Activated CD4-positive, alpha-beta T cell treated with anti-CD3 and anti-CD28 coated beads, Interleukin-2, amount 10 ng/mL, durations not matched to agents 24 days and 14 days (primary cell): ENCODE measurements at regions of chr2 and their contacts with region 1.

Region 1: DNA sequence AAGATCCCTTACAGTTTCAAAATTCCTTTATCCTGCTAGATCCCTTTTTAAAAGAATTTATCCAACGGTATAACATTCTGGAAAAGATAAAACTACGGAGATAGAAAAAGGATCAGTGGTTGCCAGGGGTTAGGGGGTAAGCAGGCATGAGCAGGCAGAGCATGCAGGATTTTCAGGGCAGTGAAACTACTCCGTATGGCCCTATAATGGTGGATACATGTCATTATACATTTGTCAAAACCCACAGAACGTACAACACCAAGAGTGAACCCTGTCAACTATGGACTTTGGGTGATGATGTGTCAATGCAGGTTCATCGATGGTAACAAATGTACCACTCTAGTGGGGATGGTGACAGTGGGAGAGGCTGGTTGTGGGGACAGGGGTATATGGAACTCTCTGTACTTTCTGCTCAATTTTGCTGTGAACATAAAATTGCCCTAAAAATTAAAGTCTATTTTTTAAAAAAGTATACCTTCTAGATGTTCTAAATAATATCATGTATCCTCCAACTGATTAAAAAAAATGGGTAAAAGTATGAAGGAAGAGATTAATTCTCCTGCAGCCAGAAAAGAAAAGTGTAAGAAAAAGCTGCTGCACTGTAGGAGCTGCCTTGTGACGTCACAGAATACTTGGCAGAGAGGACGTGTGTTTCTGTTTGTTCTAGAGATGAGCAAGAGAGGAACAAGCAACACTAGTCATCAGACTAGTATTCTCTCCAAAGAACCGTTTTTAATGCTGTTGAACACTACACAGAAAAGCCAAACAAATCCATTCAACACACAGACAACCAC is 23.6 kb downstream of the ANKRD44 start:
- DNase-seq: peak; percentile 86
- H3K4me3 Mint-ChIP-seq: peak overlapping the region; percentile 73
- H3K27ac Mint-ChIP-seq: peak overlapping the region; percentile 97
- H3K4me1 Mint-ChIP-seq: peaks cover 60% of the 10 kb centered on the region
- H3K27me3 Mint-ChIP-seq: no peaks in the 10 kb centered on the region

Region 2: DNA sequence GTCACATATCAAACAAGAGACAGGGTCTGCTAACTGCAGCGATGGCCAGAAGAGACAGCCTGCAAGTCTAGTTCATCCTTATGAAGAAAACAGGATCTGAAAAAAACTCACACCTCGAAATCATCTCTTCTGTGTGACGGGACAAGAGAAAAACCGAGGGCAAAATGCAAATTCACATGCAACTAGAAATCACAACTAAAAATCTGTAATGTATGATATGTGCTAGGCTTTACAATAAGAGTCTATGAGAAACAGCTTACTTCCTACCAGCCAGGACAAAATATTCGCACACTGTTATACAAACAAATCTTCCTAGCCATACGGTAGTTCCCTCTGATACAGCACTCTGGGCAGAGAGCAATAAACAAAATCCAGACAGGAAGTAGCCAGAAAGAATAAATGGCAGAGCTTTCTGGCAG is 25.2 kb before region 1 on chr2:
- intact Hi-C with region 1: loop called (anchors 1 kb)
- DNase-seq: no peak
- H3K4me3 Mint-ChIP-seq: peak overlapping the region; percentile 77
- H3K27ac Mint-ChIP-seq: peak overlapping the region; percentile 87
- H3K4me1 Mint-ChIP-seq: peaks cover 71% of the 10 kb centered on the region
- H3K27me3 Mint-ChIP-seq: no peaks in the 10 kb centered on the region

Region 3: GRCh38 chr2:197268786-197269584 is 18.0 kb before region 1 on chr2:
- intact Hi-C with region 1: loop called (anchors 1 kb)
- DNase-seq: peak; percentile 77
- H3K4me3 Mint-ChIP-seq: peak overlapping the region; percentile 12
- H3K27ac Mint-ChIP-seq: peak overlapping the region; percentile 71
- H3K4me1 Mint-ChIP-seq: peaks cover 80% of the 10 kb centered on the region
- H3K27me3 Mint-ChIP-seq: no peaks in the 10 kb centered on the region

Region 4: DNA sequence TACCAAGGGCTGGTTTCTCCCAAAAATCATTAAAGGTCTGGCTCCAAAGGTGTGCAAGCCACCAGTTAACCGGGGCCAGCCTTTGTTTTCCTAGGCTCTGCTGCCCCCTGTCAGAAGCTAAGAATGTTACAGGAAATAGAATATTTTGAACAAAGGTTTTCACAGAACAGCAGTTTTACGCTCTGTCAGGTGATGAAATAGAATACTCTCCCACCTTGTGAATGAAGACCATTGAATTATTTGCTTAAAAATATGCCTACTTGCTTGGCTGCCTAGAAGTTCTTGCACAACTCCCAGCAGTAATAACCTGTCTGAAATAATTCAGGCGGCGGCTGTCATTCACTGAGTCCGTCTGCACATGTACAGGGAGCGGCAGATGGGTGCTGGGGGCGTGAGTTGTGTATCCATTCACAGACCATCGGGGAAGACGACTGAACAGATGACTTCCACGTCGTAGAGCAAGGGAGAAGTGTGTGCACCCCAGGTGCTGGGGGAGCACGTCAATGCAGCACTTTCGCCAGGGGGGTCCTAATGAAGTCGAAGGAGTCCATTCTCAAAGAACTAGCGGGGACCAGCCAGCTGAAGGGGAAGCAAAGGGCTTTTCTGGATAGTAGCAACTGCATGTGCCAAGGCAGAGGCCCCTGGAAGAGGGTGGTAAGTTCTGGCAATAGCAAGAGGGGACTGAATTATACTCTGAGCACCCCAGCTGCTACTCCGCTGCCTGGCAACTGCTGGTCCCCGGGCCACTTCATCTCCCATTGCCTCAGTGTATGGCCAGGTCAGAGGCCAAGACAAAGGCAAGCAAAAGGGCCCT is 91.7 kb after region 1 on chr2:
- intact Hi-C with region 1: no loop called
- DNase-seq: peak; percentile 89
- H3K4me3 Mint-ChIP-seq: no peak overlapping the region
- H3K27ac Mint-ChIP-seq: no peak overlapping the region
- H3K4me1 Mint-ChIP-seq: peaks cover 22% of the 10 kb centered on the region
- H3K27me3 Mint-ChIP-seq: peaks cover 12% of the 10 kb centered on the region